HCT116 (cell line): ENCODE measurements at regions of chr5 and their contacts with region 1.

Region 1: GRCh38 chr5:141040771-141041426 is 10.3 kb upstream of the PCDHB1 start:
- DNase-seq: peak; percentile 93
- ATAC-seq: peak; percentile 84
- H3K4me3 ChIP-seq: peak overlapping the region; percentile 55 to 56
- H3K27ac ChIP-seq: 0 out of 2 replicates have a peak overlapping the region, but pooled peaks have one; percentile 8
- H3K4me1 ChIP-seq: peaks cover 2 to 10% of the 10 kb centered on the region in 2 experiments; a peak in 2 of 4 replicates
- H3K27me3 ChIP-seq: no peaks in the 10 kb centered on the region
- CTCF ChIP-seq: peak; percentile 67 to 94 (median 81)
- POLR2A ChIP-seq: no peak
- RAD21 ChIP-seq: peak; percentile 98

Region 2: GRCh38 chr5:140840978-140841959 is 199.6 kb before region 1 on chr5 and contains the start of gene PCDHA8:
- CTCF ChIA-PET with region 1: interaction called, 7 read pairs
- POLR2A ChIA-PET with region 1: no interaction called
- RAD21 ChIA-PET with region 1: no interaction called
- intact Hi-C with region 1: loop called (anchors 1 kb)
- DNase-seq: peak; percentile 13
- ATAC-seq: no peak
- H3K4me3 ChIP-seq: no peak within 1 kb of the TSS
- H3K27ac ChIP-seq: no peak within 1 kb of the TSS
- H3K4me1 ChIP-seq: no peaks in the 10 kb centered on the region
- H3K27me3 ChIP-seq: no peaks in the 10 kb centered on the region
- CTCF ChIP-seq: peak; percentile 24 to 58 (median 39); a peak in 3 of 6 replicates
- POLR2A ChIP-seq: no peak
- RAD21 ChIP-seq: peak; percentile 64
- total RNA-seq, gene PCDHA8: not detected

Region 3: DNA sequence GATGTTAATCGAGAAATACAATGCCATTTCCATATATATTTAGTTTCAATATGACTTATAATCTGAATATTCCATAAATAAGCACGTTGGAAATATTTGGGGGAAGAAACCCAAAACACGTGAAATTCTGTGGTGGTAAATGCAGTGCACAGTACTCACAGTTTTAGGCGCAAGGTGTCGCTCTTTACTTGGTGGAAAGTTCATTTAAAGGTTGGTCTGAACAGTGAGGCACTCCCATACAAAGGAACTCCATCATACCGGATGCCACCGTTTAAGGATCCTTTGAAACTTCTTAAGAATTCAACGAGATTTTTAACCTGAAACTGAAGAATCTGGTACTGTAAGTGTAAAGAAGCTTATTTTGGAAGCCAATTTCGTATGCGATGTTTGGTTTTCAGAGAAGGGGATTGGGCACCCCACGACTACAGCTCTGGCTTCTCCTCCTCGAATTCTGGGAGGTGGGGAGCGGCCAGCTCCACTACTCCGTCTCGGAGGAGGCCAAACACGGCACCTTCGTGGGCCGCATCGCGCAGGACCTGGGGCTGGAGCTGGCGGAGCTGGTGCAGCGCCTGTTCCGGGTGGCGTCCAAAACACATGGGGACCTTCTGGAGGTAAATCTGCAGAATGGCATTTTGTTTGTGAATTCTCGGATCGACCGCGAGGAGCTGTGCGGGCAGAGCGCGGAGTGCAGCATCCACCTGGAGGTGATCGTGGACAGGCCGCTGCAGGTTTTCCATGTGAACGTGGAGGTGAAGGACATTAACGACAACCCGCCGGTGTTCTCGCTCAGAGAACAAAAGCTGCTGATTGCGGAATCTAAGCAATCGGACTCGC is 172.0 kb before region 1 on chr5 and contains the start of gene PCDHA11:
- CTCF ChIA-PET with region 1: interaction called, 21 read pairs
- POLR2A ChIA-PET with region 1: interaction called, 4 read pairs
- RAD21 ChIA-PET with region 1: interaction called in 1 of 2 experiments, 4 read pairs
- intact Hi-C with region 1: loop called (anchors 1 kb)
- DNase-seq: peak; percentile 8
- ATAC-seq: peak; percentile 76
- H3K4me3 ChIP-seq: no peak within 1 kb of the TSS
- H3K27ac ChIP-seq: no peak within 1 kb of the TSS
- H3K4me1 ChIP-seq: no peaks in the 10 kb centered on the region
- H3K27me3 ChIP-seq: no peaks in the 10 kb centered on the region
- CTCF ChIP-seq: peak; percentile 33 to 44 (median 36); a peak in 4 of 6 replicates
- POLR2A ChIP-seq: no peak
- RAD21 ChIP-seq: peak; percentile 64
- total RNA-seq, gene PCDHA11: 0.27 TPM

Region 4: DNA sequence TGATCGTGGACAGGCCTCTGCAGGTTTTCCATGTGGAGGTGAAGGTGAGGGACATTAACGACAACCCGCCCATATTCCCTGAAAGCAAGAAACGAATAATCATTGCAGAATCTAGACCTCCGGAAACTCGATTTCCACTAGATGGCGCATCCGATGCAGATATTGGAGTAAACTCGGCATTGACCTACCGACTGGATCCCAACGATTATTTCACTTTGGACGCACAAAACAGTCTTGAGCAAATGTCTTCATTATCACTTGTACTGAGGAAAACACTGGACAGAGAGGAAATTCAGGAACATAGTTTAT is 158.4 kb before region 1 on chr5:
- CTCF ChIA-PET with region 1: interaction called, 11 read pairs
- POLR2A ChIA-PET with region 1: interaction called, 4 read pairs
- RAD21 ChIA-PET with region 1: interaction called, 3 to 8 read pairs
- intact Hi-C with region 1: loop called (anchors 1 kb)
- DNase-seq: peak; percentile 46
- ATAC-seq: peak; percentile 69
- H3K4me3 ChIP-seq: no peak overlapping the region
- H3K27ac ChIP-seq: no peak overlapping the region
- H3K4me1 ChIP-seq: no peaks in the 10 kb centered on the region
- H3K27me3 ChIP-seq: no peaks in the 10 kb centered on the region
- CTCF ChIP-seq: peak; percentile 59 to 75 (median 60)
- POLR2A ChIP-seq: no peak
- RAD21 ChIP-seq: peak; percentile 89

Region 5: DNA sequence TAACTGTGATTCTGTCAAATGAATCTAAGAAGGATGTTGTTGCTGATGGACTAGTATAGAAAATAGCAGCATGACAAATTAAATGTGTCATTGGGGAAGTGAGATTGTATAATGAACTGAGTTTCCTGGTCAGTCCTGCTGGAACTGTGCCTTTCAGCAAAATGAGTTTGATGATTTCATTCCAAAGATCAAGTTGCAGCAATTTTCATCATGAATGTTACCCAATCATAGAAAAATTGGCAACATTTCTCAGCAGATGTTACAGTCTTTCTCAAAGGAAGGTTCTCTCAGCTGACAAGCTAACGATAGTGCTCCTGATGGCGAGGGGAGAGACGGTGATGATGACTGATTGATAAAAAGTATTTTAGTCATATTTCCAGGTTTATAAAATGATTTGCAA is 63.9 kb before region 1 on chr5:
- CTCF ChIA-PET with region 1: no interaction called
- POLR2A ChIA-PET with region 1: no interaction called
- RAD21 ChIA-PET with region 1: no interaction called
- intact Hi-C with region 1: no loop called
- DNase-seq: no peak
- ATAC-seq: no peak
- H3K4me3 ChIP-seq: no peak overlapping the region
- H3K27ac ChIP-seq: no peak overlapping the region
- H3K4me1 ChIP-seq: no peaks in the 10 kb centered on the region
- H3K27me3 ChIP-seq: no peaks in the 10 kb centered on the region
- CTCF ChIP-seq: no peak
- POLR2A ChIP-seq: no peak
- RAD21 ChIP-seq: no peak

Region 6: DNA sequence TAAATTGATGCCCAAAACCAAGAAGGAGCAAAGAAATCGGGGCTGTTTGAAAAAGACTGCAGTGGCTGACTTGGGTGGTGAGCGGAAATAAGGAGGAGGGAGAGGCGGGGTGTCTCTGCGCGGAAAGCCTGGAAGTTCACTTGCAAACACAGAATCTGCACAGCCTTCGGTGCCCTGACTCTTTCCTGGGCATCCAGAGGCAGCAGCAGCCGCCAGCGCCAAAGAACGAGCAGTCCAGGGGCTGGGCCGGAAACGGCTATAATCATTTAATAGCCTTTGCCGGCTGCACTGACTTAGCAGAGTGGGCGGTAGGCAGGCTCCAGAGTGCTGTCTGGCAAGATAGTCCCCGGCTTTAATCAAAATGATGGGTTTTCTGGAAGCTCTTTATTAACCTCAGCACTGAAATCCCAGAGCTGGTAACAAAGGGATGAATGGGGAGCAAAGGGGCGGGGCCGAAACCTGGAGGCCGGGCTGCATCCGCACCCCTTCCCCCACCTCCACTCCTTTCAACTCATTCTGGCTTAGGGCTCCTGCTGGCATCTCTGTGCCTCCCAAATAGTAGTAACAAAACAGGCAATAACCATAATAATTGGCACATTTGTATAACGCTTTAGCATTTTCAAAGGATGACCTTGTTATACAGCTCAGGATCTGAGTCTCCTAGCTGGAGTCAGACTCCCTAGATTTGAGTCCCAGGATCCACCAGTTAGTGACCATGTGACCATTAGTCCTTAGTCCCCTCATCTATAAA is 38.9 kb before region 1 on chr5:
- CTCF ChIA-PET with region 1: interaction called, 5 read pairs
- POLR2A ChIA-PET with region 1: interaction called, 10 read pairs
- RAD21 ChIA-PET with region 1: interaction called in 1 of 2 experiments, 7 read pairs
- intact Hi-C with region 1: loop called (anchors 2 kb)
- DNase-seq: peak; percentile 31
- ATAC-seq: peak; percentile 57
- H3K4me3 ChIP-seq: peak overlapping the region; percentile 43 to 59
- H3K27ac ChIP-seq: peak overlapping the region; percentile 74
- H3K4me1 ChIP-seq: peaks cover 38 to 44% of the 10 kb centered on the region in 2 experiments
- H3K27me3 ChIP-seq: no peaks in the 10 kb centered on the region
- CTCF ChIP-seq: no peak
- POLR2A ChIP-seq: peak; percentile 19
- RAD21 ChIP-seq: no peak